ENCODE measurements at regions of chr1 and their contacts with region 1.

Region 1: GRCh38 chr1:184691719-184692324 is 62.8 kb downstream of the EDEM3 start:
- DNase-seq: no peak
- ATAC-seq: peak in 3 of 8 donors; percentile 55 to 65 (median 62)
- H3K4me3 ChIP-seq: no peak overlapping the region
- H3K27ac ChIP-seq: no peak overlapping the region
- H3K4me1 ChIP-seq: peaks cover 0 to 5% (median 0%) of the 10 kb centered on the region in 9 donors
- H3K27me3 ChIP-seq: no peaks in the 10 kb centered on the region
- CTCF ChIP-seq: peak; percentile 67 to 89 (median 78)

Region 2: GRCh38 chr1:184069675-184070074 is 622.1 kb before region 1 on chr1:
- intact Hi-C with region 1: loop called in 4 of 10 experiments (anchors 2 to 10 kb)
- DNase-seq: no peak
- ATAC-seq: no peak
- H3K4me3 ChIP-seq: no peak overlapping the region
- H3K27ac ChIP-seq: no peak overlapping the region
- H3K4me1 ChIP-seq: no peaks in the 10 kb centered on the region
- H3K27me3 ChIP-seq: no peaks in the 10 kb centered on the region
- CTCF ChIP-seq: no peak

Region 3: GRCh38 chr1:184222652-184223052 is 469.2 kb before region 1 on chr1:
- intact Hi-C with region 1: loop called in 1 of 10 experiments (anchors 10 kb)
- DNase-seq: peak; percentile 48 to 56
- ATAC-seq: peak; percentile 46 to 76 (median 65)
- H3K4me3 ChIP-seq: peak overlapping the region in 9 of 10 donors; percentile 12 to 49 (median 37)
- H3K27ac ChIP-seq: peak overlapping the region in 5 of 10 donors; percentile 4 to 37 (median 28)
- H3K4me1 ChIP-seq: peaks cover 0 to 8% (median 4%) of the 10 kb centered on the region in 9 donors
- H3K27me3 ChIP-seq: no peaks in the 10 kb centered on the region
- CTCF ChIP-seq: peak; percentile 92 to 99 (median 96)

Region 4: DNA sequence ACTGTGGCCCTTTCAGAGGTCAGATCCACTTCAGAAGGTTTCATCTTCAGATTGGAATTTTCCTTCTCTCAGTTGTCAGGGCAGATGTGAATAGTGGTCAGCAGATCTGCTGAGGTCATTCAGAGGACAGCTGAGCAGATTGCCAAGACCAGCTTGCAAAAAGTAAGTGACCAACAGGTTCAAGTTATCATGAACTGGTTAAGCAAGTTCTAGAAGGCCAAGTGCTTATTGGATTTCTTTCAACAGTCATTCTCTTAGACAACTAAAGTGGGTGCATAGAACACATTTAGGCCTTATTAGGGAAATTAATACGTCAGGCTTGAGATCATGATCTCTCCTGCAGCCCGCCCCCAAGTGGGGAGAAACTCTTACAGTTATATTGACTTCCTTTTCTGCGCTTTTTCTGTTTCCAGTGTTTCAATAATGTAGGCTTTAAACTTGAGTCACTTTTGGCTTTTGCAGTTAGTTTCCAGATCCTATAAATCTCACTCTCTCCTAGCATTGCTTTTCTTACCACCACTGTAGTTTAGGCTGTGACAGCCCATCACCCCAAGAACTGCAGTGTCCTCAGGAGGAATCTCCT is 208.6 kb before region 1 on chr1:
- intact Hi-C with region 1: loop called in 1 of 10 experiments (anchors 10 kb)
- DNase-seq: peak in 1 of 2 donors; percentile 39
- ATAC-seq: peak in 7 of 8 donors; percentile 13 to 60 (median 39)
- H3K4me3 ChIP-seq: no peak overlapping the region
- H3K27ac ChIP-seq: peak overlapping the region; percentile 41 to 88 (median 64)
- H3K4me1 ChIP-seq: peaks cover 29 to 86% (median 71%) of the 10 kb centered on the region in 9 donors
- H3K27me3 ChIP-seq: no peaks in the 10 kb centered on the region
- CTCF ChIP-seq: peak in 5 of 9 donors; percentile 15 to 45 (median 30)

Measured in heart right ventricle (tissue), 16 donors.